ENCODE measurements at regions of chr12 and their contacts with region 1.

Region 1: DNA sequence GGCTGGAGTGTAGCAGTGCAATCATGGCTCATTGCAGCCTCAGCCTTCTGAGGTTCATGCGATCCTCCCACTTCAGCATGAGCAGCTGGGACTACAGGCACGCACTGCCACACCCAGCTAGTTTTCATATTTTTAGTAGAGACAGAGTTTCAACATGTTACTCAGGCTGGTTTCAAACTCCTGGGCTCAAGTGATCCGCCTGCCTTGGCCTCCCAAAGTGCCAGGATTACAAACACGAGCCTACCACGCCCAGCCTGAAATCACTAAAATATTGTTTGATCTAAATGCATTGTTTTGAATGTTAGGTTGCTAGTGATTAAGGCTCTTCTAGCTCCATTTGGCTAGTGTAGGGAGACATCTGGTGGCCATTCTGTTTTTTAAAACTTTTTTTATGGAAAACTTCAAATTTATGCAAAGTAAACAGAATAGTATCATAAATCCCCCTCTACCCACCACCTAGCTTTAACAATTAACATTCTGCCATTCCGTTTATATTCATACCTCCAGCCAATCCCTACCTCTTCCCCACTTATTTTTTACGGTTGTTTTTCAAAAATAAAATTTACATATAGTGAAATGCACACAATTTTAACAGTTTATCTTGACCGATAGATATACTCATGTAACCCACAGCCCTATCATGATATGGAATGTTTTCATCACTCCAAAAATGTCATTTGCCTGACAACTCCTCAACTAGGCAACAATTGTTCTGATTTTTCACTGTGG is 37.8 kb downstream of the MYO1H start:
- DNase-seq: peak; percentile 81
- ATAC-seq: peak; percentile 79
- H3K4me3 ChIP-seq: peak overlapping the region; percentile 35; the same call in 1 of the 2 replicates
- H3K27ac ChIP-seq: no peak overlapping the region
- H3K4me1 ChIP-seq: no peaks in the 10 kb centered on the region
- H3K27me3 ChIP-seq: peaks cover 21% of the 10 kb centered on the region
- CTCF ChIP-seq: peak; percentile 80

Region 2: DNA sequence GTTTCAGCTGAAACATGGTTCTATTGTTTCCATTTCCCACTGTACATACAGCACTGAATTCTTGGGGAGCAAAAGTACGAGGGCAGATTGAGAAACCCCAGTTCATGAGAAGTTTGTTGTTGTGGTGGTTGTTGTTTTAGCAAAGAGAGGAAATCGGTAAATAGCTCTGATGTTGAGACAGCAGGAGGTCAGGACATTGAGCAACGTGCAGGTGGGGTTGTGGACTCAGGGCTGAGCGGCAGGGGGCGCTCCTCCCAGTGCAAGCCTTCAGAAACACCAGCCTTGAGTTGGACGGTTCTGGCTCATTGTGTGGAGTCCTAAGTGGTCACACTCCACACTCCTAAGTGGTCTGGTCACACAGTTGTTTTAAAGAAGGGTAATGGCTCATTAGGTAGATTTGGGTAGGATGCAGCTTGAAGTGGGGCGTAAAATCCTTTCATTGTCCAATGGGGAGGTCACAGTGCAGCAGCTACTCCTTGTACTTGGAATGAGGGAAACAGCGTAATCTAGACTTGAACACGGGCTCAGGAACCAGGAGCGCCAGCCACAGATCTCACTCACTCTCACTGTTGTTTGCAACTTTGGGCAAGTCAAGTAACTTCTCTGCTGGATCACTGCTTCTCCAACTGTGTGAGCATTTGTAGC is 1714.4 kb before region 1 on chr12:
- CTCF ChIA-PET with region 1: interaction called, 12 read pairs
- POLR2A ChIA-PET with region 1: no interaction called
- intact Hi-C with region 1: no loop called
- DNase-seq: peak; percentile 20
- ATAC-seq: no peak
- H3K4me3 ChIP-seq: no peak overlapping the region
- H3K27ac ChIP-seq: no peak overlapping the region
- H3K4me1 ChIP-seq: no peaks in the 10 kb centered on the region
- H3K27me3 ChIP-seq: peaks cover 23% of the 10 kb centered on the region
- CTCF ChIP-seq: peak; percentile 78

Region 3: GRCh38 chr12:108884116-108885012 is 501.1 kb before region 1 on chr12:
- CTCF ChIA-PET with region 1: no interaction called
- POLR2A ChIA-PET with region 1: no interaction called
- intact Hi-C with region 1: no loop called
- DNase-seq: peak; percentile 76
- ATAC-seq: peak; percentile 71
- H3K4me3 ChIP-seq: no peak overlapping the region
- H3K27ac ChIP-seq: no peak overlapping the region
- H3K4me1 ChIP-seq: no peaks in the 10 kb centered on the region
- H3K27me3 ChIP-seq: 0 out of 2 replicates have a peak, but pooled peaks cover 12% of the 10 kb centered on the region
- CTCF ChIP-seq: peak; percentile 90

Region 4: GRCh38 chr12:109110988-109111495 is 274.5 kb before region 1 on chr12:
- CTCF ChIA-PET with region 1: interaction called, 14 read pairs
- POLR2A ChIA-PET with region 1: no interaction called
- intact Hi-C with region 1: loop called (anchors 1 kb)
- DNase-seq: peak; percentile 42
- ATAC-seq: peak; percentile 75
- H3K4me3 ChIP-seq: peak overlapping the region; percentile 61
- H3K27ac ChIP-seq: peak overlapping the region; percentile 41; the same call in 1 of the 2 replicates
- H3K4me1 ChIP-seq: no peaks in the 10 kb centered on the region
- H3K27me3 ChIP-seq: no peaks in the 10 kb centered on the region
- CTCF ChIP-seq: no peak

Region 5: DNA sequence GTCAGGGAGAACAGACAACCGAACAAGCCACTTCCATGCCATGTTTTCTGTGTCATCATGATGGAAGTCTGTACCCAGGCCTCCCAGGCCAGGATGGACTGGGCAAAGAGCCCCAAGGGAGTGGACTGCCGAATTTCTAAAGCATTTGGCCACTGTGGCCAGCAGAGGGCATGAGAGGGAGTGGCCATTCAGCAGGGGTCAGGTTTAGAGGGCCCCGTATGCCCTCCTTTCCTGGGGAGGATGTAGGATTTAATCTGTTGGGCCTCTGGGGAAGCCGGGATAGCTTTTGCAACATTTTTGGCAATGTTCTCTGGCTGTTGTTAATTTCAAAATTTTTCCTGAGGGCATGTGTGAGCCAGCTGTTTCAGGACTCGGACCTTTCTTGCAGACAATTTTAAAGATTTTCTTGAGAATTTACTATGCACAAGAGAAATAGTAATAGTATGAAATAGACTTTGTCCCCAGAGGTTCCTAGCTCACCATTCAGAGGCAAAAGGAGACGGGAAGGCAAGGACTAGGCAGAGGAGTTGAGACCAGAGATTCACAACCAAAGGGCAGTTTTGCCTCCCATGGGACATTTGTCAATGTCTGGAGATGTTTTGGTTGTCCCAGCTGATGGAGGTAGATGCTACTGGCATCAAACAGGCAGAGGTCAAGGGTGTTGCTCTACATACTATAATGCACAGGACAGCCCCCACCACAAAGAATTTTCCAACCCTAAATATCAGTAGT is 251.2 kb before region 1 on chr12:
- CTCF ChIA-PET with region 1: interaction called, 4 read pairs
- POLR2A ChIA-PET with region 1: no interaction called
- intact Hi-C with region 1: loop called (anchors 1 kb)
- DNase-seq: peak; percentile 63
- ATAC-seq: peak; percentile 92
- H3K4me3 ChIP-seq: no peak overlapping the region
- H3K27ac ChIP-seq: no peak overlapping the region
- H3K4me1 ChIP-seq: no peaks in the 10 kb centered on the region
- H3K27me3 ChIP-seq: no peaks in the 10 kb centered on the region
- CTCF ChIP-seq: peak; percentile 94

Region 6: DNA sequence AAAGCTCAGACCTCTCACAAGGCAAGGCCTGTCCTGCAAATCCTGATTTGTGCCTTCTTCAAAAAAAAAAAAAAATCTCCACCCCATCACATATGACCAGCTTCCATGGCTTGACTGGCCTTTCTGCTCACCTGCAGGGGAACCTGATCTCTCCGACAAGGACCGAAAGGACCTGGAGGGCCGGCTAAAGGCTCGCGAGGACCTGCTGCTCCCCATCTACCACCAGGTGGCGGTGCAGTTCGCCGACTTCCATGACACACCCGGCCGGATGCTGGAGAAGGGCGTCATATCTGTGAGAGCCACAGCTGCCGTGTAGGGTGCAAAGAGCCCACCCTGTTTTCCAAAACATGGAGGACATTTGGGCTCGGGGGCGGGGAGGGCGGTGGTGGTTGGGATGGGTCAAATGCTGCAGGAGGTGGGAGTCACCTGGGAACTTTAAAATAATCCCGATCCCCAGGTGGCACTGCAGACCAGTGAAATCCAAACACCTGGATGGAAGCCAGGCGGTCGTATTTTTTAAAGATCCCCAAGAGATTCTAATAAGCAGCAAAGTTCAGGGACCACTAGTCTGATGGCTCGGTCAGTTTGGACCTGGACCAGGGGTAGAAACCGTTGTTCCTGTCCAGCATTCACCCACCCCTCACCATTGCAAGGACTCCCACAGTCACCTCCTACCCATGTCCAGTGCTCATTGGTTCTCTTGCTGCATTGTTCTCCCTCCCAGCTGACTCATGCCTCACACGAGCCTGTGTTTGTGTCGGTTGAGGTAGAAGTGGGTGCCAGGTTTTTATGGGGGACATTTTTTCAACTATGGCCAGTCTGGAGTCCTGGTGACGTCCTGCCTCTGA is 121.2 kb before region 1 on chr12:
- CTCF ChIA-PET with region 1: interaction called, 20 read pairs
- POLR2A ChIA-PET with region 1: no interaction called
- intact Hi-C with region 1: loop called (anchors 1 kb)
- DNase-seq: peak; percentile 87
- ATAC-seq: peak; percentile 98
- H3K4me3 ChIP-seq: no peak overlapping the region
- H3K27ac ChIP-seq: no peak overlapping the region
- H3K4me1 ChIP-seq: 0 out of 2 replicates have a peak, but pooled peaks cover 3% of the 10 kb centered on the region
- H3K27me3 ChIP-seq: no peaks in the 10 kb centered on the region
- CTCF ChIP-seq: peak; percentile 98

Region 7: GRCh38 chr12:109625131-109625559 is 239.6 kb after region 1 on chr12:
- CTCF ChIA-PET with region 1: interaction called, 17 read pairs
- POLR2A ChIA-PET with region 1: no interaction called
- intact Hi-C with region 1: no loop called
- DNase-seq: peak; percentile 62
- ATAC-seq: peak; percentile 89
- H3K4me3 ChIP-seq: no peak overlapping the region
- H3K27ac ChIP-seq: no peak overlapping the region
- H3K4me1 ChIP-seq: no peaks in the 10 kb centered on the region
- H3K27me3 ChIP-seq: peaks cover 32% of the 10 kb centered on the region
- CTCF ChIP-seq: 0 out of 2 replicates have a peak, but pooled peaks have one; percentile 12

Measured in PC-3 (cell line).